ENCODE measurements at regions of chr5 and their contacts with region 1.

Region 1: GRCh38 chr5:36414869-36415282 is 113.2 kb upstream of the RANBP3L start:
- DNase-seq: no peak
- ATAC-seq: peak in 3 of 4 donors; percentile 41 to 65 (median 49)
- H3K4me3 ChIP-seq: no peak overlapping the region
- H3K27ac ChIP-seq: peak overlapping the region in 1 of 12 donors; percentile 25
- H3K4me1 ChIP-seq: peaks cover 0 to 18% (median 0%) of the 10 kb centered on the region in 12 donors
- H3K27me3 ChIP-seq: no peaks in the 10 kb centered on the region
- CTCF ChIP-seq: peak; percentile 25 to 66 (median 53)
- POLR2A ChIP-seq: no peak

Region 2: DNA sequence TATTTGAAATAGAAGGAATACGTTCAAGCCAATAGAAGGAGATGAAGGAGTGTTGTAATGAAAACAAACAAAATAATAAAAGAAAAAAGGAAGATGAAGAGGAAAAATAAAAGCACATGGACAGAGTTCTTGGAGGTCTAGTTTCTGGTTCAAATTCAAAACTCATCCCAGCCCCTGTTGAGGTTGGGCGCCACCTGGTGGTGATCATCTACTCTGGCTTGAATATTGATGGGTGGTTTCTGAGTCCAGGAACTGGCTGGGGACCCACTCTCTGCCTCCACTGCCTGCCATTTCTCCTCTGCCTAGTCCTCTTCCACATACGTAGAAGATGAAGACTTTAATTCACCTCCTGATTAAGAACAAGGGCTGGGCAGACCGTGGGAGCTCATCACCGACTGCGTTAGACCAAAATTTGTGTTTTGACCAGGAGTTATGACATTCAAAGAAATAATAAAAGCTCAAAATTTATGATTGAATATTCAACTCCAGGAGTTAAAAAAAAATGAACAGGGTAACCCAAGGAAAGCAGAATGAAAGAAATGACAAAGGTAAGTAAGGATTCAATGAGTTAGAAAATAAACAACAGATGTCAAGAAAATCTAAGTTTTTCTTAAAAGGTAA is 92.6 kb after region 1 on chr5:
- intact Hi-C with region 1: loop called in 9 of 10 experiments (anchors 2 to 5 kb)
- DNase-seq: peak; percentile 58 to 85 (median 71)
- ATAC-seq: peak in 3 of 4 donors; percentile 54 to 71 (median 54)
- H3K4me3 ChIP-seq: no peak overlapping the region
- H3K27ac ChIP-seq: no peak overlapping the region
- H3K4me1 ChIP-seq: peaks cover 0 to 6% (median 0%) of the 10 kb centered on the region in 12 donors
- H3K27me3 ChIP-seq: no peaks in the 10 kb centered on the region
- CTCF ChIP-seq: peak; percentile 64 to 88 (median 82)
- POLR2A ChIP-seq: no peak

Region 3: GRCh38 chr5:36695677-36696673 is 281.1 kb after region 1 on chr5:
- intact Hi-C with region 1: loop called (anchors 1 to 2 kb)
- DNase-seq: peak in 3 of 5 donors; percentile 34 to 63 (median 61)
- ATAC-seq: peak in 2 of 4 donors; percentile 27 to 35
- H3K4me3 ChIP-seq: no peak overlapping the region
- H3K27ac ChIP-seq: no peak overlapping the region
- H3K4me1 ChIP-seq: peaks cover 0 to 32% (median 18%) of the 10 kb centered on the region in 12 donors
- H3K27me3 ChIP-seq: no peaks in the 10 kb centered on the region
- CTCF ChIP-seq: peak; percentile 33 to 71 (median 52)
- POLR2A ChIP-seq: no peak